Head of caudate nucleus (tissue), 42 donors: ENCODE measurements at regions of chr11 and their contacts with region 1.

Region 1: GRCh38 chr11:47426061-47426956 is at the start of gene PSMC3:
- DNase-seq: peak; percentile 96 to 100 (median 99)

Region 2: DNA sequence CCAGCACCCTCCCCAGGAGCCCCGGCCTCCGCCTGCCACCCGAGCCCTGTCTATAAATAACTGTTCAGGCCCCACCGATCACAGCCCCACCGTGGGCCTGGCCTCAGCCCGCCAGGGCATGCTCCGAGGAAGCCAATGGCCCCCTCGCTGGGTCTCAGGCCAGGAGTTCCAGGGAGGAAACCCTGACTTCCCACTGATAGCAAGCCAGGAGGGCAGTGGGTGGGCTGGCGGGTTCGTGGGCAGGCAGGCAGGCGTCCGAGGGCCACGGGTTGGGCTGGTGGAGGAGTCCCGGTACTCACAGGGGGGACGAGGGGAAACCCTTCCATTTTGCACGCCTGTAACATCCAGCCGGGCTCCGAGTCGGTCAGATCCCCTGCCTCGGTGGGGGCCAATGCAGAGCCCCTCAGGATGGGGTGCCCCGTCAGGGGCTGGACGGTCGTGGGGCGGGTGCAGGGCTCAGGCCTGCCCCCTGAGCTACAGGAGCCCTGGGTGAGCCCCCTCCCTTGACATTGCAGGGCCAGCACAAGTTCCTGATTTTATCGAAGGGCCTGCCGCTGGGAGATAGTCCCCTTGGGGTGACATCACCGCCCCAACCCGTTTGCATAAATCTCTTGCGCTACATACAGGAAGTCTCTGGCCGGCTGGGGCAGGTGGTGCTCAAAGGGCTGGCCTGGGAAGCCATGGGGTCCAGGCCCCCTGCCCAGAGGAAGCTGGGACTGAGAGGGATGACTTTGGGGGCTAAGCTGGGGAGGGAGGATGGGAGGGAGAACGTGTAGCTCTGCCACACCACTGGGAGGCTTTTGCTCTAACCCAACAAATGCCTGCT is 48.1 kb before region 1 on chr11 and contains the start of gene SPI1:
- intact Hi-C with region 1: no loop called
- DNase-seq: peak in 28 of 42 donors; percentile 38 to 76 (median 54)

Region 3: DNA sequence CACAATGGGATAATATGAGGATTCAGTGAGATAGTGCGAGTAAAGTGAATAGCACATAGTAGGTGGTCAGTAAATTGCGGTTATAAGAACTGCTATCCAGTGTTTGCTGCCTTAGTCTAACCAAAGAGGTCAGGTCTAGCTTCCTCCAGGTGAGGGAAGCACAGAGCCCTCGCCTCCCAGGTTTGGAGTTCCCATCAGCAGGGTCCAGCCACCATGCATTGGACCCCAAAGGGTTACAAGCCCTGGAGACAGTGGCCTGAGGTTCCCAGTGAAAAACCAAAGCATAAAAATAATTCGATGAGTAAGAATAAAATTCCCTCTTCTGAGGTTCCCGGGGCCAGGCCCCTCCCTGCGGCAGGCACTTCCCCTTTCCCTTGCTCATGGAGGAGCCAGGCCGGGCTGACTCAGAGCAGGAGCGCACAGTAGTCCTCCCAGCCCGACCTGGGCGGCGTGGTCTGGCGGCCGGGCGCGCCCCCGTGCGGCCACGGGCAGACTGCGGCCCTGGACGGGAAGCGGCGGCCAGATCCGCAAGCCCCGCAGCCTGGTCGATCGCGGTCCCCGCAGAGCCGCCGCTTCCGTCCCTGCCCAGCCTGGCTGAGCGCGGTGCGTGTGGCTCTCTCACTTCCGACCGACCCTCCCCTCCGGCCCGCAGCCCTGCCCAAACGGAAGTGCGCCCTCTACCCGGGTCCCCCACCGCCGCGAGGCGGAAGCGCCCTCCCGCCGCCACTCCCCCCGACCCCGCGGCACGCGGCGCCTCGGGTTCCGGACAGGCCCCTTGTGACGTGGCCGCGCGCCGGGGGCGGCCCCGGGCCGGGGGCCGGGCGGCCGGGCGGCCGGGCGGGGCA is 18.3 kb before region 1 on chr11 and contains the start of gene SLC39A13:
- intact Hi-C with region 1: loop called (anchors 1 kb)
- DNase-seq: peak; percentile 76 to 97 (median 94)

Region 4: GRCh38 chr11:47552566-47553416 is 126.5 kb after region 1 on chr11 and contains the start of gene CELF1:
- intact Hi-C with region 1: loop called (anchors 2 kb)
- DNase-seq: peak; percentile 80 to 97 (median 93)